HepG2 (cell line): ENCODE measurements at regions of chr12 and their contacts with region 1.

Region 1: GRCh38 chr12:5191803-5192535 is 148.3 kb downstream of the KCNA5 start:
- DNase-seq: no peak
- ATAC-seq: no peak
- H3K4me3 ChIP-seq: no peak overlapping the region
- H3K27ac ChIP-seq: no peak overlapping the region
- H3K4me1 ChIP-seq: no peaks in the 10 kb centered on the region
- H3K27me3 ChIP-seq: peaks cover 0 to 1% of the 10 kb centered on the region in 2 experiments; a peak in 2 of 5 replicates
- CTCF ChIP-seq: no peak
- EP300 ChIP-seq: no peak
- POLR2A ChIP-seq: no peak
- RAD21 ChIP-seq: no peak

Region 2: DNA sequence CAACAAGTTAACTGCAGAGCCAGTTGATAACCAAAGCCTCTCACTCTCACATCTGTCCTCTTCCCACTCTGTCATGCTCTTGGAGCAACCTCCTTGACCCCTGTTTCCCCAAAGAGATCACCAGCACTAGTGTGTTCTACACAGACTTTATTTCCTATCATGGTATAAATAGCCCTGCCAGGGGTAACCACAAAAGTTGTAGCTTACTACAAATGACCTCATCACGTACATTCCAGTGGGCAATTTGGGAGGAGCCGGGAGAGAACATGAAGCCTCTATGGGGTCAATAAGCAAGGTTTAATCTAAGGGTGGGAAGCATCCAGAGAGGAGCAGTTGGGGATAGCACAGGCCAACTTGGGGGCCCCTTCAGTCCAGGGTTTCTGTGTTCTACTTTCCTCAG is 38.2 kb after region 1 on chr12:
- CTCF ChIA-PET with region 1: no interaction called
- POLR2A ChIA-PET with region 1: no interaction called
- in situ Hi-C with region 1: no loop called
- intact Hi-C with region 1: no loop called
- DNase-seq: no peak
- ATAC-seq: no peak
- H3K4me3 ChIP-seq: no peak overlapping the region
- H3K27ac ChIP-seq: no peak overlapping the region
- H3K4me1 ChIP-seq: no peaks in the 10 kb centered on the region
- H3K27me3 ChIP-seq: no peaks in the 10 kb centered on the region; a peak in 1 of 5 replicates
- CTCF ChIP-seq: no peak
- EP300 ChIP-seq: no peak
- POLR2A ChIP-seq: no peak
- RAD21 ChIP-seq: no peak

Region 3: GRCh38 chr12:5417500-5417899 is 225.5 kb after region 1 on chr12:
- CTCF ChIA-PET with region 1: no interaction called
- POLR2A ChIA-PET with region 1: no interaction called
- in situ Hi-C with region 1: no loop called
- intact Hi-C with region 1: no loop called
- DNase-seq: no peak
- ATAC-seq: no peak
- H3K4me3 ChIP-seq: no peak overlapping the region
- H3K27ac ChIP-seq: no peak overlapping the region
- H3K4me1 ChIP-seq: no peaks in the 10 kb centered on the region
- H3K27me3 ChIP-seq: no peaks in the 10 kb centered on the region
- CTCF ChIP-seq: no peak
- EP300 ChIP-seq: no peak
- POLR2A ChIP-seq: no peak
- RAD21 ChIP-seq: no peak

Region 4: GRCh38 chr12:5586201-5586600 is 394.2 kb after region 1 on chr12:
- CTCF ChIA-PET with region 1: no interaction called
- POLR2A ChIA-PET with region 1: no interaction called
- in situ Hi-C with region 1: no loop called
- intact Hi-C with region 1: loop called (anchors 5 kb)
- DNase-seq: peak; percentile 28
- ATAC-seq: peak; percentile 56; the same call in 1 of the 3 replicates
- H3K4me3 ChIP-seq: no peak overlapping the region
- H3K27ac ChIP-seq: no peak overlapping the region
- H3K4me1 ChIP-seq: peaks cover 18% of the 10 kb centered on the region
- H3K27me3 ChIP-seq: peaks cover 0 to 6% of the 10 kb centered on the region in 2 experiments; a peak in 1 of 5 replicates
- CTCF ChIP-seq: no peak
- EP300 ChIP-seq: peak in 1 of 2 experiments; percentile 44; a peak in 1 of 4 replicates
- POLR2A ChIP-seq: no peak
- RAD21 ChIP-seq: no peak